Activated T-helper 2 cell treated with anti-CD3 and anti-CD28 coated beads, Interferon-gamma antibody, Interleukin-2, Interleukin-4, amounts not matched to agents 10 μg/mL and 5 μg/mL and 100 μg/mL, durations not matched to agents 14 hours and 24 hours and 36 hours (primary cell): ENCODE measurements at regions of chr5 and their contacts with region 1.

Region 1: GRCh38 chr5:110086658-110087388 is 397.1 kb downstream of the MAN2A1 start:
- DNase-seq: peak; percentile 18
- H3K4me3 Mint-ChIP-seq: peak overlapping the region; percentile 51
- H3K27ac Mint-ChIP-seq: peak overlapping the region; percentile 89
- H3K4me1 Mint-ChIP-seq: peaks cover 31% of the 10 kb centered on the region
- H3K27me3 Mint-ChIP-seq: no peaks in the 10 kb centered on the region

Region 2: GRCh38 chr5:109409844-109410388 is 676.9 kb before region 1 on chr5 and contains the start of gene PJA2:
- intact Hi-C with region 1: loop called (anchors 5 kb)
- DNase-seq: peak; percentile 96
- H3K4me3 Mint-ChIP-seq: peak within 1 kb of the TSS; percentile 95
- H3K27ac Mint-ChIP-seq: peak within 1 kb of the TSS; percentile 98
- H3K4me1 Mint-ChIP-seq: peaks cover 41% of the 10 kb centered on the region
- H3K27me3 Mint-ChIP-seq: no peaks in the 10 kb centered on the region
- total RNA-seq, gene PJA2: 52.2 and 52.9 TPM in 2 replicates

Region 3: DNA sequence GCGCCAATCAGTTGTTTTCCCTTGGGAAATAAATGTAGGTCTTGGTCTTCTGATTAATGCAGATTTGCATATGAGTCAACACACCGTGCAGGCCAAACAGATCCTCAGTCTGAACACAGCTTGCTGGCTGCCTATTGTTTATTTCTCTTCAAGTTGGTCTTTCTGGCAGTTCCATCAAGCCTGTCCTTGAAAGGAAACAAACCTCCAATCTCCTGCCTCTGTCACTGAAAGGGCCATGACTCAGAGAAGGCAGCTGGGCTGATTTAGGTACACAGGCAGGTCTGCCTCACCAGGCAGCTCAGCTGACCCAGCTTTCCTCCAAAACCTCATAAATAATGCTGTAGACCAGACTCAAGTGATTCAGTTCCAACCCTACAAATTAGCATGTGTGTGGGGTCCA is 221.2 kb before region 1 on chr5:
- intact Hi-C with region 1: loop called (anchors 10 kb)
- DNase-seq: no peak
- H3K4me3 Mint-ChIP-seq: no peak overlapping the region
- H3K27ac Mint-ChIP-seq: no peak overlapping the region
- H3K4me1 Mint-ChIP-seq: peaks cover 34% of the 10 kb centered on the region
- H3K27me3 Mint-ChIP-seq: no peaks in the 10 kb centered on the region

Region 4: DNA sequence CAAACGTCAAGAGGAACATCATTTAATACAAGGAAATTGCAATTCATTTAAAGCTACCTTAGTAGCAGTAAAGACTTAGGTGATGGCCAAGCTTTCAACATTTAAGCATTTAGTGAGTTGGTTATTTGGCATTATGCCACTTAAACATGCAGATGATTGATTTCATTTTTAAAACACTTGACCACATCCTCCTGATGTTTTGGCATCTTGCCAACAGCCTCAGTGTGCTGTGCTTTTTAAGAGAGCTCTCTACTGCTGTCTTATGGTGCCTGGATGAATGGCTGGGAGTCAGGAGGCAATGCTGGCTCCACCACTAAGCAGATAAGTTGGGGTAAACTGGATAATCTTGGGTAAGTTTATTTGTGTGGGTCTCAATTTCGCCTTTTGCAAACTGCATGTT is 32.6 kb before region 1 on chr5:
- intact Hi-C with region 1: loop called (anchors 1 kb)
- DNase-seq: peak; percentile 68
- H3K4me3 Mint-ChIP-seq: no peak overlapping the region
- H3K27ac Mint-ChIP-seq: peak overlapping the region; percentile 82
- H3K4me1 Mint-ChIP-seq: peaks cover 28% of the 10 kb centered on the region
- H3K27me3 Mint-ChIP-seq: no peaks in the 10 kb centered on the region

Region 5: GRCh38 chr5:110063640-110064602 is 22.9 kb before region 1 on chr5:
- intact Hi-C with region 1: loop called (anchors 1 kb)
- DNase-seq: no peak
- H3K4me3 Mint-ChIP-seq: no peak overlapping the region
- H3K27ac Mint-ChIP-seq: no peak overlapping the region
- H3K4me1 Mint-ChIP-seq: peaks cover 38% of the 10 kb centered on the region
- H3K27me3 Mint-ChIP-seq: no peaks in the 10 kb centered on the region

Region 6: GRCh38 chr5:110321117-110321516 is 234.3 kb after region 1 on chr5:
- intact Hi-C with region 1: loop called (anchors 1 kb)
- DNase-seq: no peak
- H3K4me3 Mint-ChIP-seq: no peak overlapping the region
- H3K27ac Mint-ChIP-seq: no peak overlapping the region
- H3K4me1 Mint-ChIP-seq: peaks cover 16% of the 10 kb centered on the region
- H3K27me3 Mint-ChIP-seq: no peaks in the 10 kb centered on the region